ENCODE measurements at regions of chr3 and their contacts with region 1.

Region 1: GRCh38 chr3:23253214-23253613 is 50.1 kb downstream of the UBE2E2 start:
- DNase-seq: no peak
- H3K4me3 Mint-ChIP-seq: no peak overlapping the region
- H3K27ac Mint-ChIP-seq: no peak overlapping the region
- H3K4me1 Mint-ChIP-seq: no peaks in the 10 kb centered on the region
- H3K27me3 Mint-ChIP-seq: no peaks in the 10 kb centered on the region

Region 2: GRCh38 chr3:23202921-23203707 is 50.1 kb before region 1 on chr3 and contains the start of gene UBE2E2:
- CTCF ChIA-PET with region 1: no interaction called
- POLR2A ChIA-PET with region 1: no interaction called
- intact Hi-C with region 1: loop called (anchors 5 kb)
- DNase-seq: peak; percentile 54
- H3K4me3 Mint-ChIP-seq: peak within 1 kb of the TSS; percentile 73
- H3K27ac Mint-ChIP-seq: no peak within 1 kb of the TSS
- H3K4me1 Mint-ChIP-seq: peaks cover 8% of the 10 kb centered on the region
- H3K27me3 Mint-ChIP-seq: peaks cover 32% of the 10 kb centered on the region
- total RNA-seq, gene UBE2E2: 2.0 to 4.2 TPM

Region 3: DNA sequence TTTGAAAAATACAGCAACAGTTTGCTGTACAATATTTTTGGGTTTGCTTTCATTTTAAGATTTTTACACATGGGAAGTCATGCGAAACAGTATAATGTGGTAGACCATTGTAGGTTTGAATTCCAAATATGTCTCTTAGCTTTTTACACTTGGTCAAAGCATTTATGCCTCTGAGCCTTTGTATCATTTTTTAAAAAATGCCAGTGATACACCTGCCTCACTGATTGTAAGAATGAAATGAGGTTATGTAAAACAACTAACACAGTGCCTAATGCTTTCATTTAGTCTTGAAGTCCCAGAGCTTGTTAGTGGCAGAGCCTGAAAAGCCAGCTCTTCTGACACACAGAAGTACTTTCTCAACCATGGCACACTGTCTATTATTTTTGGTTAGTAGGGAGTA is 151.9 kb after region 1 on chr3:
- CTCF ChIA-PET with region 1: no interaction called
- POLR2A ChIA-PET with region 1: no interaction called
- intact Hi-C with region 1: no loop called
- DNase-seq: no peak
- H3K4me3 Mint-ChIP-seq: no peak overlapping the region
- H3K27ac Mint-ChIP-seq: no peak overlapping the region
- H3K4me1 Mint-ChIP-seq: no peaks in the 10 kb centered on the region
- H3K27me3 Mint-ChIP-seq: no peaks in the 10 kb centered on the region